ENCODE measurements at regions of chrX and their contacts with region 1.

Region 1: GRCh38 chrX:154462396-154462795 is 4.3 kb downstream of the PLXNA3 start:
- DNase-seq: no peak
- H3K4me3 ChIP-seq: no peak overlapping the region
- H3K27ac ChIP-seq: no peak overlapping the region
- H3K4me1 ChIP-seq: no peaks in the 10 kb centered on the region
- H3K27me3 ChIP-seq: no peaks in the 10 kb centered on the region
- CTCF ChIP-seq: no peak

Region 2: DNA sequence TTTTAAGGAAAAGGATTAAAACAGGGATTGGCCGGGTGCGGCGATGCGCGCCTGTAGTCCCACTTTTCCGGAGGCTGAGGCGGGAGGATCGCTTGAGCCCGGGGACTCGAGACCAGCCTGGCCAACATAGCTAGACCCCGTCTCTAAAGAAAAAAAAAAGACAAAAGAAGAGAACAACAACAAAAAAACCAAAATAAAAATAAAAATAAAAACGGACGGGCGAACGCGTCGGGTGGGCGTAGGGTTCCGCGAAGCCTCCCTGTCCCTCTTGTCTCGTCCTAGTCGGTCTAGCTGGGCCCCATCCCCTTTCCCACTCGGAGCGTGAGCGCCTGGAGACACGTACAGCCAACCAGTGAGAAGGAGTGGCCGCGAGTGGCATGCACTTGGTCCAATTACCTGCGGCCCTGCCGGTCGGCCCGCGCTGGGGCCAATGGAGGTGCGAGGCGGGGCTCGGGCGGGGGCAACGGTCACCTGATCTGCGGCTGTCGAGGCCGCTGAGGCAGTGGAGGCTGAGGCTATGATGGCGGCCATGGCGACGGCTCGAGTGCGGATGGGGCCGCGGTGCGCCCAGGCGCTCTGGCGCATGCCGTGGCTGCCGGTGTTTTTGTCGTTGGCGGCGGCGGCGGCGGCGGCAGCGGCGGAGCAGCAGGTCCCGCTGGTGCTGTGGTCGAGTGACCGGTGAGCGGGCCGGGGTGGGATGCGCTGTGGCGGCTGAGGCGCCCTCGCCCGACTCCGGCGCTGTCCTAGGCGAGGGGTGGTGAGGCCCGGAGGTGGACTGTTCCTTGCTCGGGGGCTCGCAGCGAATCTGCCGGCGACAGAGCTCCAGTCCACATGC is 34.0 kb before region 1 on chrX and contains the start of gene ATP6AP1:
- CTCF ChIA-PET with region 1: no interaction called
- POLR2A ChIA-PET with region 1: interaction called, 16 read pairs
- intact Hi-C with region 1: no loop called
- DNase-seq: peak; percentile 94
- H3K4me3 ChIP-seq: peak within 1 kb of the TSS; percentile 73
- H3K27ac ChIP-seq: peak within 1 kb of the TSS; percentile 67
- H3K4me1 ChIP-seq: peaks cover 5% of the 10 kb centered on the region
- H3K27me3 ChIP-seq: no peaks in the 10 kb centered on the region
- CTCF ChIP-seq: 0 out of 2 replicates have a peak, but pooled peaks have one; percentile 15
- total RNA-seq, gene ATP6AP1: 77.1 and 77.5 TPM in 2 replicates

Region 3: DNA sequence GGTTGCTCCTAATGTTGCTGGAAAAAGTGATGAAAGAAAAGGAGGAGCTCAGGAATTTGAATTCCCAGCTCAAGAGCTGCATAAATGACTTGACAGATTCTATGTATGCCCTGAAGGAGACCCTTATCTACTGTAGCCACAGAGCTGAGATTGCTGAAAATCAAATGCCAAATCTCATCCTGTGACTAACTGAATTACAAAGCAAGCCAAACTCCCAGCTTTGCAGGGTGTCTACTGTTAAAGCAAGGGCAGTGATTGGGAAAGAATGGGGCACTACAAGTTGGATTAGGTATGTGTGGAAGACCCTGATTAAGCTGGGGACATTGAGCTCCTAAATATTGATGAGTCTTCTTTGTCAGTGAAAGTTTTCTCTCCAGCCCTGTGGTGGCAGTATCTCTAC is 392.9 kb after region 1 on chrX:
- CTCF ChIA-PET with region 1: no interaction called
- POLR2A ChIA-PET with region 1: no interaction called
- intact Hi-C with region 1: no loop called
- DNase-seq: no peak
- H3K4me3 ChIP-seq: no peak overlapping the region
- H3K27ac ChIP-seq: no peak overlapping the region
- H3K4me1 ChIP-seq: no peaks in the 10 kb centered on the region
- H3K27me3 ChIP-seq: no peaks in the 10 kb centered on the region
- CTCF ChIP-seq: no peak